HepG2 (cell line): ENCODE measurements at regions of chr13 and their contacts with region 1.

Region 1: GRCh38 chr13:51832471-51833152 is 12.4 kb downstream of the TMEM272 start:
- DNase-seq: no peak
- ATAC-seq: peak; percentile 79
- H3K4me3 ChIP-seq: no peak overlapping the region
- H3K27ac ChIP-seq: no peak overlapping the region
- H3K4me1 ChIP-seq: no peaks in the 10 kb centered on the region
- H3K27me3 ChIP-seq: no peaks in the 10 kb centered on the region
- CTCF ChIP-seq: peak; percentile 59
- EP300 ChIP-seq: no peak
- POLR2A ChIP-seq: no peak
- RAD21 ChIP-seq: no peak

Region 2: DNA sequence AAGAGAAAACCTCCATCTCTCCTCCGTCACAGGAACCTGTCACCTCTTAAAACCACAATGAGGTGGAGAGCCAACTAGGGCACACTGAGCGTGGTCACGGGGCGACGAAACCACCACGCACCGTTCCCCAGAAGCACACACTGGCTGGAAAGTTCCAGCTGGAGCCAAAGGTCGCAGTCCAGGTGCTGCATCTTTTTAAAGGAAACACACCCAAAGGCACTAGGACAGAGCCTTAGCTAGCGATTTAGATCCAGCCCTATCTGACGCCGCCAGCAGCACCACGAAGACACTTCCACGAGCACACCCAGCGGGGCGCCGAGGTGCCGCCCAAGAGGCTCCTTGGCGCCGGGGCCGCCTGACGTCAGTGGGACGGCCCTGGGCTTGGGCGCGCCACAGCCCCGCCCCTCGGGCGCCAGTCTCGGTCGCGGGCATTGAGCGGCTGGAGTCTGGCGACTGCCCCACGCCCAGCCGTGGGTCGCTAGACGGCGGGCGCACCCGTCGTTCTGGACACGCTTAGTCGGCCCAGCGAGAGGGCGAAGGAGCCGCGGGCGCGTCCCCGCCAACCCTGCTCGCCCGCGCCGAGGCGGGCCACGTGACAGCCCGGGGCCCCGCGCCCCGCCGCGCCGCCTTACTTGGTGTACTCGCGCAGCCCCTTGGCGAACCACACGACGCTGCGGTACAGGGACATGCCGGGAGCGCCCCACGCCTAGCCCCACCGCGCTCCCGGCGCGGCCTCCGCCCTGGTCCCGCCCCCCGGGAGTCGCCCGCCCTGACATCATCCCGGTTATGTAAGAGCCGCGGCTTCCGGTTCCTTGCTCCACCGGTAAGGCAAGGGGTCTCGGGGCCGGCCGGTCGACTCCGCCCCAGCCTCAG is 29.0 kb before region 1 on chr13 and contains the start of gene DHRS12:
- CTCF ChIA-PET with region 1: no interaction called
- POLR2A ChIA-PET with region 1: no interaction called
- in situ Hi-C with region 1: no loop called
- intact Hi-C with region 1: loop called (anchors 1 kb)
- DNase-seq: peak; percentile 60
- ATAC-seq: peak; percentile 89
- H3K4me3 ChIP-seq: peak within 1 kb of the TSS; percentile 68 to 85 (median 75)
- H3K27ac ChIP-seq: peak within 1 kb of the TSS; percentile 77
- H3K4me1 ChIP-seq: peaks cover 49% of the 10 kb centered on the region
- H3K27me3 ChIP-seq: no peaks in the 10 kb centered on the region
- CTCF ChIP-seq: peak; percentile 14; the same call in 1 of the 2 replicates
- EP300 ChIP-seq: peak in 1 of 2 experiments; percentile 20; a peak in 1 of 4 replicates
- POLR2A ChIP-seq: peak; percentile 73 to 81
- RAD21 ChIP-seq: peak; percentile 9
- total RNA-seq, gene DHRS12: 4.8 and 7.2 TPM in 2 replicates

Region 3: DNA sequence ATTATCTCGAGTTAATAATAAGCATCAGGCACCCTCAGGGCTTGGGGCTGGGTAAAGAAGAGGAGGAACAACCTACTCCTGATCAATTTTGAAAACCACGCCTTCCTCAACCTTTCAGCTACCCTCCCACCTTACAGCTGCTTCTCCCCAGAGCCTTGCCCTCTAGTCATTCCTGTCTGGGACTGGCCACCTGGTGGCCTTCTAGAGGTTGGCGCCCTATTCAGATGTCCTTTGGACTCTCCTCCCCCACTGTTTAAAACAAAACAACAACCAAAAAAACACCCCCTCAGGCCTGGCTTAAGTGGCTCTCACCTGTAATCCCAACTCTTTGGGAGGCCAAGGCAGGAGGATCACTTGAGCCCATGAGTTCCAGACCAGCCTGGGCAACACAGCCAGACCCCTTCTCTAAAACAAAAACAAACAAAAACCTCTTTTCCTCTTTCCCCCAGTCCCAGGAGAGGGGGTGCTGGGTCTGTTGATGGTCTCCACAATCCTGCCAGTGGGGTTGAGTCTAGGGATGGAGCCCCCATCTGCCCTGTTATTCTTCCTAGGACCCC is 91.4 kb after region 1 on chr13:
- CTCF ChIA-PET with region 1: no interaction called
- POLR2A ChIA-PET with region 1: no interaction called
- in situ Hi-C with region 1: no loop called
- intact Hi-C with region 1: no loop called
- DNase-seq: peak; percentile 44
- ATAC-seq: peak; percentile 88
- H3K4me3 ChIP-seq: no peak overlapping the region
- H3K27ac ChIP-seq: no peak overlapping the region
- H3K4me1 ChIP-seq: peaks cover 14% of the 10 kb centered on the region
- H3K27me3 ChIP-seq: no peaks in the 10 kb centered on the region
- CTCF ChIP-seq: peak; percentile 53
- EP300 ChIP-seq: no peak
- POLR2A ChIP-seq: no peak
- RAD21 ChIP-seq: peak; percentile 30; the same call in 1 of the 2 replicates